ENCODE measurements at regions of chr1 and their contacts with region 1.

Region 1: GRCh38 chr1:18581420-18581880 is 49.2 kb upstream of the PAX7 start:
- DNase-seq: peak; percentile 36
- H3K4me3 Mint-ChIP-seq: no peak overlapping the region
- H3K27ac Mint-ChIP-seq: no peak overlapping the region
- H3K4me1 Mint-ChIP-seq: no peaks in the 10 kb centered on the region
- H3K27me3 Mint-ChIP-seq: no peaks in the 10 kb centered on the region
- CTCF ChIP-seq: peak; percentile 89

Region 2: DNA sequence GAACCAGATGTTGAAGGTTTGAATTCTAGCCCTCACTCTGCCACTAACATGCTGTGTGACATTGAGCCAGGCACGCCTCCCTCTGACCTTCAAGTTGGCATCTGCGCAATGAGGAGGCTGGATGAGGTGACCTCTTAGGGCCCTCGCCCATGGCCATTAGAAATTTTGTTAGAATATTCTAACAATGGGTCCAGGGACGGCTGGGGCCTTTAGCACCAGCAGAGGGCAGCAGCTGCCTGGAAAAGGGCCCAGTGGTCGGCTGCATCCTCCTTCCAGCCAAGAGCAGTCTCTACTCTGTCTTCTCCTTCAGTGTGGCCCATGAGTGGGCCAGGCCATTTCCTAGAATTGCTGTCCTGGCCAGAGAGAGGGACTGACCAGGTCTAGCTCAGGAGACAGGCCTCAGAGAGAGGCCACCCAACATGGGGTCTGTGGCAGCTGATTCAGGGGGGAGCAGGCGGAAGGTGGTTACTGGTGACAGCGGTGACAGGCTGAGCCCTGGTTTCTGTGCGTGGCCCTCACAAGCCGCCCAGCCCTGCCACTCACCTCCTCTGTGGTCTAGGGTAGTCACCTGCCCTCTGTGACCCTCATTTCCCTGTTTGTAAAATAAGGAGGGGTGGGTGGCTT is 927.6 kb before region 1 on chr1:
- CTCF ChIA-PET with region 1: interaction called, 8 read pairs
- POLR2A ChIA-PET with region 1: no interaction called
- intact Hi-C with region 1: loop called (anchors 5 kb)
- DNase-seq: peak; percentile 56
- H3K4me3 Mint-ChIP-seq: no peak overlapping the region
- H3K27ac Mint-ChIP-seq: no peak overlapping the region
- H3K4me1 Mint-ChIP-seq: no peaks in the 10 kb centered on the region
- H3K27me3 Mint-ChIP-seq: no peaks in the 10 kb centered on the region
- CTCF ChIP-seq: peak; percentile 72

Region 3: DNA sequence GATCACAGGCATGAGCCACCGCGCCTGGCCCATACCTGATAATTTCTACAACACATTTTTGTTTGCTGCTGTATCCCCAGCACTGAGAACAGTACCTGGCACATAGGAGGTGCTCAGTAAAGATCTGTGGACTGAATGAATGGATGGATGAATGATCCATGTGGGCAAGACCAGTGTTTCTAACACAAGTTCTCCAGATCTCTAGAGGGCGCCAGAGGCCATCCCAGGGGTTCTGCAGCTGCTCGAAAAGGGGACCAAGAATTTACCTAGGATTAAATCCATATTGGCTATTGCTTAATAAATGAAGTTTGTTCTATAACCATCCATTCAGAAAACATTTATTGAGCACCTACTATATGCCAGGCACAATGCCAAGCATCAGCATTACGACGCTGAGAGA is 658.6 kb before region 1 on chr1:
- CTCF ChIA-PET with region 1: interaction called, 3 read pairs
- POLR2A ChIA-PET with region 1: no interaction called
- intact Hi-C with region 1: loop called (anchors 1 kb)
- DNase-seq: peak; percentile 54
- H3K4me3 Mint-ChIP-seq: no peak overlapping the region
- H3K27ac Mint-ChIP-seq: no peak overlapping the region
- H3K4me1 Mint-ChIP-seq: no peaks in the 10 kb centered on the region
- H3K27me3 Mint-ChIP-seq: peaks cover 45% of the 10 kb centered on the region
- CTCF ChIP-seq: peak; percentile 53

Region 4: GRCh38 chr1:18299441-18300338 is 281.8 kb before region 1 on chr1:
- CTCF ChIA-PET with region 1: no interaction called
- POLR2A ChIA-PET with region 1: no interaction called
- intact Hi-C with region 1: loop called (anchors 2 kb)
- DNase-seq: peak; percentile 35
- H3K4me3 Mint-ChIP-seq: no peak overlapping the region
- H3K27ac Mint-ChIP-seq: no peak overlapping the region
- H3K4me1 Mint-ChIP-seq: no peaks in the 10 kb centered on the region
- H3K27me3 Mint-ChIP-seq: peaks cover 38% of the 10 kb centered on the region
- CTCF ChIP-seq: peak; percentile 42

Region 5: DNA sequence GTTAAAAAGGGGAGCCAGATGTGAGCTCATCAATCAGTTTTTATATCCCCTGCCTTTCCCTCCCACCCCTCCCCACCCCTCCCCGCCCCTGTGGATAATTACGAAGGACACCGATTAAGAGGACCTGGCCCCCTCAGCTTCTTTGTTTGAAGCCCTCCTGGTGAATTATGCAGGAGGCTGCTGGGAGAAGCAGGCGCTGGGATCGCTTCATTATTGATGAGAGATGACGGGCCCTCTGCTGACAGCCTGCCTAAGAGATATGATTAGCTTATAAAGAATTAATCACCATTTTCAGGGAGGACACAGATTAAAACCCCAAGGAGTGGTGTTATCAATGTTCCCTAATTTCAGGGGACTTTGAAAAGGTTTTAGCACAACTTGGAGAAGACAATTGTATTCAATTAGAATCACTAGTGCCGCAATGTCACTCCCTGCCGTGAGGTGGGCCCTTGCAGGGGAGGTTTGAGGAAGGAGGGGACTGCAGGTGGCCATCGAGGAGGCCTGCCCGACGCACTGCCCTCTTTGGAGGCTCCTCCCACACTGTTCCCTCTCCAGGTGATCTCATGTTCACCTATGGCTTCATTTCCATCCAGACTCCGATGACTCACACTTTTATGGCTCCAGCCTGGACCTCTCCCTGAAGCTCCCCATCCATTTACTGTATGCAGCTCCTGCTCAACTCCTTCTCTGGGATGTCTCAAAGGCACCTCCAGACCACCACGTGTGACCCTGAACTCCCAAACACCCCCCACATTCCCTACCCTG is 167.7 kb before region 1 on chr1:
- CTCF ChIA-PET with region 1: no interaction called
- POLR2A ChIA-PET with region 1: no interaction called
- intact Hi-C with region 1: no loop called
- DNase-seq: peak; percentile 16
- H3K4me3 Mint-ChIP-seq: no peak overlapping the region
- H3K27ac Mint-ChIP-seq: no peak overlapping the region
- H3K4me1 Mint-ChIP-seq: no peaks in the 10 kb centered on the region
- H3K27me3 Mint-ChIP-seq: peaks cover 14% of the 10 kb centered on the region
- CTCF ChIP-seq: no peak

Region 6: GRCh38 chr1:18561967-18562366 is 19.5 kb before region 1 on chr1:
- CTCF ChIA-PET with region 1: interaction called, 12 read pairs
- POLR2A ChIA-PET with region 1: no interaction called
- intact Hi-C with region 1: no loop called
- DNase-seq: no peak
- H3K4me3 Mint-ChIP-seq: no peak overlapping the region
- H3K27ac Mint-ChIP-seq: no peak overlapping the region
- H3K4me1 Mint-ChIP-seq: no peaks in the 10 kb centered on the region
- H3K27me3 Mint-ChIP-seq: peaks cover 98% of the 10 kb centered on the region
- CTCF ChIP-seq: no peak

Region 7: GRCh38 chr1:18635891-18636595 is 54.6 kb after region 1 on chr1:
- CTCF ChIA-PET with region 1: no interaction called
- POLR2A ChIA-PET with region 1: no interaction called
- intact Hi-C with region 1: no loop called
- DNase-seq: no peak
- H3K4me3 Mint-ChIP-seq: no peak overlapping the region
- H3K27ac Mint-ChIP-seq: no peak overlapping the region
- H3K4me1 Mint-ChIP-seq: no peaks in the 10 kb centered on the region
- H3K27me3 Mint-ChIP-seq: peaks cover 100% of the 10 kb centered on the region
- CTCF ChIP-seq: no peak